ENCODE measurements at regions of chr3 and their contacts with region 1.

Region 1: GRCh38 chr3:150409512-150410310 is 1.6 kb downstream of the TSC22D2 start:
- DNase-seq: no peak
- H3K4me3 ChIP-seq: peak overlapping the region; percentile 88
- CTCF ChIP-seq: peak; percentile 35

Region 2: DNA sequence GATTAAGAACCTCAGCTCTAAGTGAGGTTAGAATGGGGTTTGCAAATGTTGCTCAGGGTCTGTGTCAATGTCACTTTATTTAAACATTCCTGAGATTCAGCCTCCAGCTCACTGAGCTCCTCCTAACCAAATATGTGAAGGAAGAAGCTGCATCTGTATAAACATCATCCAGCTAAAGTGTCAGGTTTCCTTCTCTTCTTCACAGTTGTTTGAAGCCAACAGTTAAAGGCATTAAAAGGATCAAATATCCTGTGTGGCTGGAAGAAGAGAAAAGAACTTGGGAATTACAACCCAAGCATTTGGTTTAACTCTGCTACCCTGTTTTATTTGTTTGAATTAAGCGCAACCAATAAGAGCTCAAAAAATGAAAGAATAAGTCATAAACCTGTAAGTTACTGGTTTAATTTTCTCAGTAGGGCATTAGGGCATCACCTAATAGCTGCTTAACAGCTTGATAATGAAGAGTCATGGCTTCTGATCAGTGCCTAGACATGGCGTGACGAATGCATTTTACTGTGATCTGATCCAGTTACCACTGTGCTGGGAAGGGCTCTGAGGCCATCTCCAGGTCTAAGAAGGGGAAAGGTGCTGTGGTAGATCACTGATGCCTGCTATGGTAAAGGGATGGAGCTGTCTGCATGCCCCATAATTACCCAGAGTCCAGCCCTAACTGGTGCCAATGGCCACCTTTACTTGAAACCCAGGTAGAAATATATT is 167.3 kb before region 1 on chr3:
- in situ Hi-C with region 1: loop called (anchors 5 kb)
- DNase-seq: peak; percentile 38
- H3K4me3 ChIP-seq: no peak overlapping the region
- CTCF ChIP-seq: no peak

Region 3: GRCh38 chr3:150577859-150578258 is 168.1 kb after region 1 on chr3:
- in situ Hi-C with region 1: no loop called
- DNase-seq: no peak
- H3K4me3 ChIP-seq: no peak overlapping the region
- CTCF ChIP-seq: no peak